SK-N-SH (cell line): ENCODE measurements at regions of chr1 and their contacts with region 1.

Region 1: DNA sequence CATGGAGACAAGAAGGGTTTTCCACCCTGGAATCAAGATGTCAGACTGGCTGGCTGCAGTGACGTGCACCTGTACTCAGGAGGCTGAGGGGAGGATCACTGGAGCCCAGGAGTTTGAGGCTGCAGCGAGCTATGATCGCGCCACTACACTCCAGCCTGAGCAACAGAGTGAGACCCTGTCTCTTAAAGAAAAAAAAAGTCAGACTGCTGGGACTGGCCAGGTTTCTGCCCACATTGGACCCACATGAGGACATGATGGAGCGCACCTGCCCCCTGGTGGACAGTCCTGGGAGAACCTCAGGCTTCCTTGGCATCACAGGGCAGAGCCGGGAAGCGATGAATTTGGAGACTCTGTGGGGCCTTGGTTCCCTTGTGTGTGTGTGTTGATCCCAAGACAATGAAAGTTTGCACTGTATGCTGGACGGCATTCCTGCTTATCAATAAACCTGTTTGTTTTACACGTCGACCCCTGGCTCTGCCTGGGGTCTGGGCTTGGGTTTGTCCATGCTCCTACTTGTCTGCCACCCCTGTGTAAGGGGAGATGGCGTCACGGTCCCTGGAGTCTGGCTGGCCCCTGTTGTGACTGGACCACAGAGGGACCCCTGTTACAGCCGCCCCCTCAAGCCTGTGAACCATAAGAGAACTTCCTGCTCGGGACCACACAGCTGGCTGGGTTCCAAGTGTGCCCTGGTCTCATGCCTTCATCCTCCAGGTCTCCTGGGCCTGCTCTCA is 20.9 kb upstream of the VPS13D start:
- DNase-seq: peak; percentile 88
- H3K4me3 ChIP-seq: peak overlapping the region in 1 of 2 experiments; percentile 22; a peak in 1 of 4 replicates
- H3K27ac ChIP-seq: no peak overlapping the region
- H3K4me1 ChIP-seq: peaks cover 0 to 5% of the 10 kb centered on the region in 2 experiments; a peak in 1 of 4 replicates
- H3K27me3 ChIP-seq: no peaks in the 10 kb centered on the region; the same call in 1 of the 2 replicates
- CTCF ChIP-seq: peak; percentile 93
- EP300 ChIP-seq: no peak
- RAD21 ChIP-seq: peak; percentile 97

Region 2: DNA sequence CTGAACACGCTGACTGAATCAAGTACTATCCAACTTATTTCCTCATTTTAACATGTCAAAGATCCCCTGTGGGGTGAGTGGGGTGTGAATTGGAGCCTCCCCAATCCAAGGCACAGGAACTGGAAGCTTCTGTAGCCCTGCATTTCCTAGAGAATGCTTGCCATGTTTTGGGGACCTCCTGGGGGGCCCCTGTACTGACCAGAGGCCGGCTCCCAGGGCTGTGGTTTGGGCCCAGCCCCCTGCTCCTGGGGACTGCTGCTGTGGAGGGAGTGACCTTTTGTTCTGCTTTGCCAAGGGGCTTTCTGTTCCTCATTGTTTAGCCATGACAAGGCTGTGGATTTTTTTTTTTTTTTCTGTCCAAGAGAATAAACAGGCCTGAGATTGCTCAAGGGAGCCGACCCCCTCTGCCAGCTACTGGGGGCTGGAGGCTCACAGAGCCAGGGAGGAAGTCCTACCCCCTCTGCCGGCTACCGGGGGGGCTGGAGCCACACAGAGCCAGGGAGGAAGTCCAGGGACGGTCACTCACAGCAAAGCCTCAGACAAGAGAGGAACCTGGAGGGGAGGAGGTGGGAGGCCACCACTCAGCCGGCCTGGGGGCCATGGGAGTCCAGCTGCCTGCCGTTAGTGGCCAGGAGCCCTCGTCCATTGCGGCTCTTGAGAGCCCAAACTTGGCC is 24.8 kb before region 1 on chr1:
- CTCF ChIA-PET with region 1: interaction called, 10 read pairs
- POLR2A ChIA-PET with region 1: no interaction called
- DNase-seq: peak; percentile 93
- H3K4me3 ChIP-seq: no peak overlapping the region
- H3K27ac ChIP-seq: peak overlapping the region; percentile 17 to 81; a peak in 3 of 4 replicates
- H3K4me1 ChIP-seq: peaks cover 10 to 32% of the 10 kb centered on the region in 2 experiments; a peak in 3 of 4 replicates
- H3K27me3 ChIP-seq: no peaks in the 10 kb centered on the region
- CTCF ChIP-seq: peak; percentile 22; the same call in 1 of the 2 replicates
- EP300 ChIP-seq: no peak; a peak in 1 of 4 replicates
- RAD21 ChIP-seq: peak; percentile 32

Region 3: GRCh38 chr1:12220890-12221289 is 12.0 kb after region 1 on chr1:
- CTCF ChIA-PET with region 1: interaction called, 10 read pairs
- POLR2A ChIA-PET with region 1: no interaction called
- DNase-seq: no peak
- H3K4me3 ChIP-seq: no peak overlapping the region
- H3K27ac ChIP-seq: no peak overlapping the region
- H3K4me1 ChIP-seq: no peaks in the 10 kb centered on the region
- H3K27me3 ChIP-seq: no peaks in the 10 kb centered on the region; the same call in 1 of the 2 replicates
- CTCF ChIP-seq: no peak
- EP300 ChIP-seq: no peak
- RAD21 ChIP-seq: no peak

Region 4: GRCh38 chr1:12229835-12230548 is 21.1 kb after region 1 on chr1 and contains the start of gene VPS13D:
- CTCF ChIA-PET with region 1: interaction called, 13 read pairs
- POLR2A ChIA-PET with region 1: no interaction called
- DNase-seq: peak; percentile 96
- H3K4me3 ChIP-seq: peak within 1 kb of the TSS; percentile 76 to 85
- H3K27ac ChIP-seq: peak within 1 kb of the TSS in 1 of 2 experiments; percentile 43; a peak in 1 of 4 replicates
- H3K4me1 ChIP-seq: peaks cover 6 to 7% of the 10 kb centered on the region in 2 experiments; a peak in 2 of 4 replicates
- H3K27me3 ChIP-seq: no peaks in the 10 kb centered on the region
- CTCF ChIP-seq: peak; percentile 85
- EP300 ChIP-seq: no peak; a peak in 1 of 4 replicates
- RAD21 ChIP-seq: peak; percentile 17; the same call in 1 of the 2 replicates
- polyA plus RNA-seq, gene VPS13D: 14.4 and 15.0 TPM in 2 replicates

Region 5: DNA sequence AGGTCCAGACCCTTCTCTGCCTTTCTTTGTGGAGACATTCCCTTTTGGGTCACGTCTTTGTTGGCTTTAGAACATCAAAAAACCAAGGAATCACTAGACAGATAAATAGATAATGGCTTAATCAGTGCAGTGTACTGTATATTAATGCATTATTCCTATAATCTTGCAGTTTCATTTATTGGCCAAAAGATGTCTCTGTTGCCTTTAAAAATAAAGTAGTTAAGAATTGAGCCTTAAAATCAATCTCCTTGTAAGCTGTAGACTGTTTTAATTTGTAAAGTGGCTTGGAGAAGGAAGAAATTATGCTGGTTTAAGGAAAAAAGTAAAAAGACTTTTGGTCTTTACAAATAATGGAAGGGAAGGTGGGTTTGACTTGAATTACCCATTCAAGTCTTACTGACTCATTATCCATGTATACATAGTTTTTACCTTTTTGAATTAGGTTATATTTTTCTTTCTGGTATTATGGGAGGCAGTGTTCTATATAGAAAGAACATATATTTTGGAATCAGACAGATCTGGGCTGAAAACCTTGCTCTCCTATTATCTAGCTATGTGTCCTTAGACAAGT is 105.5 kb after region 1 on chr1:
- CTCF ChIA-PET with region 1: no interaction called
- POLR2A ChIA-PET with region 1: no interaction called
- DNase-seq: peak; percentile 28
- H3K4me3 ChIP-seq: no peak overlapping the region
- H3K27ac ChIP-seq: no peak overlapping the region; a peak in 1 of 4 replicates
- H3K4me1 ChIP-seq: no peaks in the 10 kb centered on the region; a peak in 2 of 4 replicates
- H3K27me3 ChIP-seq: no peaks in the 10 kb centered on the region
- CTCF ChIP-seq: peak; percentile 75
- EP300 ChIP-seq: no peak
- RAD21 ChIP-seq: peak; percentile 77

Region 6: GRCh38 chr1:12326986-12327385 is 118.1 kb after region 1 on chr1:
- CTCF ChIA-PET with region 1: no interaction called
- POLR2A ChIA-PET with region 1: no interaction called
- DNase-seq: no peak
- H3K4me3 ChIP-seq: no peak overlapping the region
- H3K27ac ChIP-seq: no peak overlapping the region
- H3K4me1 ChIP-seq: peaks cover 0 to 5% of the 10 kb centered on the region in 2 experiments; a peak in 2 of 4 replicates
- H3K27me3 ChIP-seq: no peaks in the 10 kb centered on the region
- CTCF ChIP-seq: no peak
- EP300 ChIP-seq: no peak
- RAD21 ChIP-seq: no peak